OCI-LY7 (cell line): ENCODE measurements at regions of chr6 and their contacts with region 1.

Region 1: DNA sequence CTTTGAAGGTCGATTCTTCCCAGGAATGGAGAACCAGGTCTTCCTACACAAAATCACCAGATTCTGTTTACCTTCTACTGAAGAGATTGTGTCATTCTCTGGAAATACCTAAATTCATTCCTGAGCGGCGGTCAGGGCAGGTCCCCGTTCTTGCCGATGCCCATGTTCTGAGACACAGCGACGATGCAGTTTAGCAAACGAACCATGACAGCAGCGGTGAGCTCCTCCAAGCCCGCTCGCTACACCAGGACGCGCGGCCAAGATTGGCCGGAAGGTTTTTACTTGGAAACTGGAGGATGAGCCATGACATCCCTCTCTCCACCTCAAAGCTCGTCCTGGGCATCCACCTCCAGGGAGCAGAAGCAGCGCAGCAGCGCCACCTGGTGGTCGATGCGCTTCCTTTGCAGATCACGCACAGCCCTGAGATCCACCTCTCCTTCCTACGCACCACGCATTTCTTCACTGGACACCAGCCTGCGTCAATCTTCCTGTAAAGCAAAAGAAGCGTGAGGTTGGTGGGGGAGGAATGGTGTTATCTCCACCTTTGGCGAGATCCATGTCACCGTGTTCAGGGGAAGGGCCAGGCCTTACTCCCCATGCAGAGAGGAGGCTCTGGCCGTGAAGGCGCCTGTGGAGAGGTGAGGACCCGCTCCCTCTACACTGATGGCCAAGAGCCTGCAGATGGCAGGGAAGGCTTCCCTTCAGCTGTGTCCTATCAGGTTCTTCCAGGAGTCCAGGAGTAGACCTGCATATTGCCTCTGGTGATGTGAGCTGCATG is 9.9 kb upstream of the HLA-B start:
- DNase-seq: peak; percentile 88
- H3K4me3 ChIP-seq: peak overlapping the region; percentile 66
- H3K27ac ChIP-seq: no peak overlapping the region
- H3K4me1 ChIP-seq: peaks cover 12% of the 10 kb centered on the region
- CTCF ChIP-seq: peak; percentile 93

Region 2: DNA sequence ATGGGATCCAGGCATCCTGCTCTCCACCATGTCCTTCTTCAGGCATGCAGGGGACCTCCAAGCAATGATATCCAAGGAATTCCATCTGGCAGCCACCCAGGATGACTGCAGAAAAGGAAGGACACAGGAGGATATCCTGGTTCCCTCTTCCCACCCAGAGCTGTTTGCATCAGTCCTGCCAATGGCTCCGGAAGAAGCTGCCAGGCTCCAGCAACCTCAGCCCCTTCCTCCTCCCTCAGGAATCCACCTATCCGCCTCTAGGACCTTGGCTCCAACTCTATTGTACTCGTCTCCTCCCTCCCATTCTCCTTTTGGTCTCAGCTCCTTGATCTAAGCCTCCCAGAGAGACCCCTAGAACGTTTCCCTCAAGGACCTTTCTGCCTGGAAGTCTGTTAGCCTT is 227.3 kb before region 1 on chr6:
- CTCF ChIA-PET with region 1: interaction called, 4 read pairs
- POLR2A ChIA-PET with region 1: no interaction called
- intact Hi-C with region 1: loop called (anchors 1 kb)
- DNase-seq: no peak
- H3K4me3 ChIP-seq: no peak overlapping the region
- H3K27ac ChIP-seq: no peak overlapping the region
- H3K4me1 ChIP-seq: peaks cover 6% of the 10 kb centered on the region
- CTCF ChIP-seq: no peak

Region 3: DNA sequence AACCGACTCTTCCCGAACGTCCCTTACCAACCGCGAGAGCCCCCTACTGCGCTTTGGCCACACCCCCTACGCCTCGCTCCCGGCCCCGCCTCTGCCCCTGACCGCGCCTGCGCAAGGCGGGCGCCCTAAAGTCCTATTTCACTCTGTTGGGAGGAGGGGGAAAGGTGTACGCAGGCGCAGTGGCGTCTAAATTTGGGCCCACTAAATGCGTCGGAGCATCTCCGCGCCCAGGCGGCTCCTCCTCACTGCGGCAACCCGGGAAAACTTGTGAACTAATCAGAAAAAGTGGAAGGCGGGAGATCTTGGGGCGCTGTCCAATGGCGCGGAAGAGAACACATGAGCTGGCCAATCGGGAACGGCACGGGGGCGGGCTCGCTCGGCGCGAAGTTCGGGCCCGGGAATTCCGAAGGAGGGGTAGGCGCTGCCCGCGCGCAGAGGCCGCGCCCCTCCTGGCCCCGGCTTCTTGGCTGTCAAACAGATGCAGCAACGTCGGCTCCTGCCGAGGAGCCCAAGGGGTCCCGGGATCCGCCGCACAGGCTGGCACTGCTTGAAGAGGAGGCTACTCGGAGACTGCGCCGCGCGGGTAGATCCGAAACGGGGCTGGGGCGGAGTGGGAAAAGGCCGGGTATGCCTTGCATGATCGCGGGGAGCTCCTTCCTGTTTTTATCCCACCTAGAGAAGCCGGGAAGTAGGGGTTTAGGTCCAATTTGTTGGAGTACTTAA is 208.6 kb before region 1 on chr6 and contains the start of gene TCF19:
- CTCF ChIA-PET with region 1: no interaction called
- POLR2A ChIA-PET with region 1: no interaction called
- intact Hi-C with region 1: no loop called
- DNase-seq: peak; percentile 97
- H3K4me3 ChIP-seq: peak within 1 kb of the TSS; percentile 88
- H3K27ac ChIP-seq: peak within 1 kb of the TSS; percentile 60
- H3K4me1 ChIP-seq: peaks cover 22% of the 10 kb centered on the region
- CTCF ChIP-seq: no peak
- total RNA-seq, gene TCF19: 61.6 and 63.2 TPM in 2 replicates